ENCODE measurements at regions of chr18 and their contacts with region 1.

Region 1: GRCh38 chr18:76803814-76804213 is 18.5 kb upstream of the ZNF236 start:
- DNase-seq: peak in 4 of 6 donors; percentile 41 to 74 (median 53)
- ATAC-seq: peak; percentile 55 to 80 (median 74)
- H3K4me3 ChIP-seq: no peak overlapping the region
- H3K27ac ChIP-seq: no peak overlapping the region
- H3K4me1 ChIP-seq: peaks cover 0 to 5% (median 0%) of the 10 kb centered on the region in 3 donors
- H3K27me3 ChIP-seq: no peaks in the 10 kb centered on the region
- CTCF ChIP-seq: peak; percentile 41 to 77 (median 55)

Region 2: DNA sequence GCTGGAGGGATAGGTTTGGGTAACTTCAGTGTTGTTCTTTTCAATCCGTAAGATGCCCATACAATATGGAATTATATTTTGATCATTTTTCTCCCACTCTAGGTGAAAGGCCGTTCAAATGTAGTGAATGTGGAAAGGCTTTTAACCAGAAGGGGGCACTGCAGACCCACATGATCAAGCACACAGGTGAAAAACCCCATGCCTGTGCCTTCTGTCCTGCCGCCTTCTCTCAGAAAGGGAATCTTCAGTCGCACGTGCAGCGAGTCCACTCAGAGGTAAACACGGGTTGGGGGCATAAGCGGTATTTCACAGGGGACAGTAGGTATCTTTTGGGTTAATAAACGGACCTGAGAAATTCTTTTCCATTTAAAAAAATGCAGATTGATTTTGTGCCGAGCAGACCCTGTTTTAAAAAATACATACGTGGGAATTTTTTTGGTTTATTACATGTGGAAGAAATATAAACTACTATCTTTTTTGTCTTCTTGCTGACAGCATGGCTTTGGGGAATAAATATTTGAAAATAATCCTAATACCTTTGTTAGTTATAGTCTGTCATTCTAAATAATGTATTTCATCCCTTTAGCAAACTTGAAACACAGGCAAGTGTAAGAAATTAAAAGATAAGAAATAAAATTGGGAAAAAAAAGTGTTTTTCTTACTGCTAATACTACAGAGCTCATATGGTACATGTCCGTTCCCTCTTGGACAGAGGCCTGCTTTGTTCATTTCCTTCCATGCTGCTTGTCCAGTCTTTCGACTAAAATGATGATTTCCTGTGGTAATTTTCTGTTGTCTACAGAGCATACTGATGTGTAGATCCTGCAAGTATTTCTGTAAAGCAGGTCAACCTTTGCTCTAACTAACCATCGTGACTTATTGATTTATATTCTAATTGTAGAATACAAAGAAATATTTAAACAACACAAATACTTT is 71.8 kb after region 1 on chr18:
- intact Hi-C with region 1: loop called in 1 of 3 experiments (anchors 10 kb)
- DNase-seq: peak in 3 of 6 donors; percentile 33 to 64 (median 41)
- ATAC-seq: peak; percentile 85 to 96 (median 94)
- H3K4me3 ChIP-seq: no peak overlapping the region
- H3K27ac ChIP-seq: no peak overlapping the region
- H3K4me1 ChIP-seq: no peaks in the 10 kb centered on the region
- H3K27me3 ChIP-seq: no peaks in the 10 kb centered on the region
- CTCF ChIP-seq: peak; percentile 25 to 58 (median 38)

Region 3: GRCh38 chr18:76982841-76983587 is 179.2 kb after region 1 on chr18:
- intact Hi-C with region 1: loop called in 2 of 3 experiments (anchors 5 to 10 kb)
- DNase-seq: peak; percentile 79 to 97 (median 90)
- ATAC-seq: peak; percentile 93 to 98 (median 96)
- H3K4me3 ChIP-seq: peak overlapping the region in 1 of 4 donors; percentile 14
- H3K27ac ChIP-seq: no peak overlapping the region
- H3K4me1 ChIP-seq: peaks cover 0 to 2% (median 0%) of the 10 kb centered on the region in 3 donors
- H3K27me3 ChIP-seq: no peaks in the 10 kb centered on the region
- CTCF ChIP-seq: peak; percentile 90 to 94 (median 92)

Region 4: DNA sequence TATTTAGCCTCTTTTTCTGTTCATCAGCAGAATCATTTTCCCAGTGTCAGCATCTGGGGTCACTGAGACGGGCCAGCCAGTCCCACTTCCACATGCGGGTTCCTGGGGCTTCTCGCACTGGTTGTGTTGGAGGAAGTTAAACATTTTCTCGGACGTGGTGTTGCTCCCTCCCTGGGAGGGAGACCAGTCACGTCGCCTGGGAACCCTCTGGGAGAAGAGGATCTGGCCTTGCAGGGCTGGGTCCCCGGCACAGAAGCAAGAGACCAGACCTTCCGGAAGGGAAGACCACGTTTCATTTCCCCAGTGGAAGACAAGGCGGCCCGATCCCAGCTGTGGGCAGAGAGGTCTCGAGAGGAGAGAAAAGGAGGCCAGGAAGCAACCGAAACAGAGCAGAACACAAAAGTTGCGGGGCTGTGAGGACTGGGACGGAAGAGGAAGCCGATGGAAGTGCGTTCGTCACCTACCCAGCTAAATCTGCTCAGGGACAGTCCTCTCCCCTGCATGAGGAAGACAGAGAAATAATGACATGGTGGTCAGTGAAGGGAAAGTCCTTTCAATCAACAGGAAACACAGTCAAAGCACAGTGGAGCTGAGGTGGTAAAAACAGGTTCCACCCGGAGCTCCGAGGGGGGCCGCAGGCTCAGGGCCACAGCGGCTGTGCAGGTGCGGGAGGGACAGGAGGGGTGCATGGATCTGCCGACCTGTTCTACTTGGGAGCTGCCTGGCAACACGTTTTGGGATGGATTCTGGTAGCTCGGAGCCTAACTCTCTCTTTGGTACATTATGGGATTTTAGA is 184.4 kb after region 1 on chr18:
- intact Hi-C with region 1: loop called in 2 of 3 experiments (anchors 5 to 10 kb)
- DNase-seq: peak in 2 of 6 donors; percentile 6 to 51
- ATAC-seq: peak in 2 of 4 donors; percentile 34 to 44
- H3K4me3 ChIP-seq: no peak overlapping the region
- H3K27ac ChIP-seq: peak overlapping the region in 1 of 4 donors; percentile 17
- H3K4me1 ChIP-seq: no peaks in the 10 kb centered on the region
- H3K27me3 ChIP-seq: no peaks in the 10 kb centered on the region
- CTCF ChIP-seq: no peak